ENCODE measurements at regions of chr2 and their contacts with region 1.

Region 1: DNA sequence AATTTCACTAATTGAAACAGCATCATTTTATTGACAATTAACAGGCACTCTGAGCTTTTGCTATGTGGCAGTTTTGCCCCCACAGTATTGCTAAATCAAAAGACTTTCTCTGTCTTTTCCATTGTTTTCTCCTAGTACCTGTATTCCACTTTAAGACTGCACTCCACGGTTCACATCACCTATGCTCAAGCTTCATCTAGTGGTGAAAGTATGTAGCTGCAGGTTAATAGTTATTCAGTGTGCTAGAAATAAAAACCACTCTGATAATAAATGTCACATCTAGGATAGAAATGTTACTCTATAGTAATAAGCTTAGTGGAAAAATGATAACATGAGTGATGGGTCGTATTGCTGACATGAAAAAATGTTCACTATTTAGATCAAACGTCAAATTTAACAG is 24.6 kb downstream of the ARL6IP6 start:
- DNase-seq: no peak
- H3K4me3 ChIP-seq: no peak overlapping the region
- H3K27ac ChIP-seq: no peak overlapping the region
- H3K4me1 ChIP-seq: no peaks in the 10 kb centered on the region
- H3K27me3 ChIP-seq: no peaks in the 10 kb centered on the region
- CTCF ChIP-seq: peak in 1 of 3 experiments; percentile 36; a peak in 2 of 4 replicates
- EP300 ChIP-seq: no peak
- POLR2A ChIP-seq: no peak
- RAD21 ChIP-seq: peak; percentile 32 to 33

Region 2: GRCh38 chr2:152755029-152755428 is 12.0 kb after region 1 on chr2:
- CTCF ChIA-PET with region 1: interaction called, 15 read pairs
- POLR2A ChIA-PET with region 1: no interaction called
- DNase-seq: peak; percentile 34 to 76
- H3K4me3 ChIP-seq: no peak overlapping the region
- H3K27ac ChIP-seq: no peak overlapping the region
- H3K4me1 ChIP-seq: no peaks in the 10 kb centered on the region
- H3K27me3 ChIP-seq: no peaks in the 10 kb centered on the region
- CTCF ChIP-seq: peak; percentile 56 to 78 (median 77)
- EP300 ChIP-seq: no peak
- POLR2A ChIP-seq: no peak
- RAD21 ChIP-seq: peak; percentile 77 to 78

Measured in H1 (cell line).